ENCODE measurements at regions of chr1 and their contacts with region 1.

Region 1: DNA sequence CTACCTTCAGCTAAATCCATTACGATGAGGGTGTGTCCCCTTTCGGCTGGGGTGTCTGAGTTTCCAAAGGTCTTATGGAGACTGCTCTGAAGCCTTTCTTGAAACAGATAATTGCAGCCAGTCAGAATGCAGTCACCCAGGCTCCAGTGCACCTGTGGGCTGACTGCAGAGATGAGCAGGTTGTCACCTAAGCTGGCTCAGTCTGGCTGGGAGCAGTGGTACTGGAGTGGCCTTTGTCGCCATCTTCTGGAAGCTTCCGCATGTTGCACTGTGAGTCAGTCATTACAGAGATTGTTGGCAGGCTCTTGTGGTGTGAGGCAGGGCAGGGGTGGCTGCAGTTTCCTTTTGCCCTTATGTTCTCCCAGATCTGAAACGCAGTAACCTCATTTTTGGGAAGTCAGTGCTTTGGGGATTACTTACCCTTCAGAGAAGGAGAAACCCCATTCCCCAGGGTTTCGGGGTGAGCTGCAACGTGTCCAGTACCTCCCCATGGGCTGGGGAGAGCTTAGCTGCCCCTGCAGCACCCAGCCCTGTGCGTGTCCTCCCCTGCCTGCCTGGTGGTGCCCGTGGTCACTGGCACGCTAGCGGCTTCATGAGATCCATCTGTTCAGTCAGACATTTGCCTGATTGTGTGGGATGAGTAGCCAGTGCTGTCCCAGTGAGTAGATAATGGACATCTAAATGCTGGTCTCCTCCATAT is 48.0 kb downstream of the SMYD2 start:
- DNase-seq: peak; percentile 86 to 88
- H3K4me3 ChIP-seq: no peak overlapping the region
- H3K4me3 Mint-ChIP-seq: peak overlapping the region; percentile 44
- H3K27ac Mint-ChIP-seq: peak overlapping the region; percentile 63
- H3K4me1 ChIP-seq: peaks cover 32% of the 10 kb centered on the region
- H3K4me1 Mint-ChIP-seq: peaks cover 55% of the 10 kb centered on the region
- H3K27me3 ChIP-seq: no peaks in the 10 kb centered on the region
- H3K27me3 Mint-ChIP-seq: no peaks in the 10 kb centered on the region
- CTCF ChIP-seq: peak; percentile 93

Region 2: DNA sequence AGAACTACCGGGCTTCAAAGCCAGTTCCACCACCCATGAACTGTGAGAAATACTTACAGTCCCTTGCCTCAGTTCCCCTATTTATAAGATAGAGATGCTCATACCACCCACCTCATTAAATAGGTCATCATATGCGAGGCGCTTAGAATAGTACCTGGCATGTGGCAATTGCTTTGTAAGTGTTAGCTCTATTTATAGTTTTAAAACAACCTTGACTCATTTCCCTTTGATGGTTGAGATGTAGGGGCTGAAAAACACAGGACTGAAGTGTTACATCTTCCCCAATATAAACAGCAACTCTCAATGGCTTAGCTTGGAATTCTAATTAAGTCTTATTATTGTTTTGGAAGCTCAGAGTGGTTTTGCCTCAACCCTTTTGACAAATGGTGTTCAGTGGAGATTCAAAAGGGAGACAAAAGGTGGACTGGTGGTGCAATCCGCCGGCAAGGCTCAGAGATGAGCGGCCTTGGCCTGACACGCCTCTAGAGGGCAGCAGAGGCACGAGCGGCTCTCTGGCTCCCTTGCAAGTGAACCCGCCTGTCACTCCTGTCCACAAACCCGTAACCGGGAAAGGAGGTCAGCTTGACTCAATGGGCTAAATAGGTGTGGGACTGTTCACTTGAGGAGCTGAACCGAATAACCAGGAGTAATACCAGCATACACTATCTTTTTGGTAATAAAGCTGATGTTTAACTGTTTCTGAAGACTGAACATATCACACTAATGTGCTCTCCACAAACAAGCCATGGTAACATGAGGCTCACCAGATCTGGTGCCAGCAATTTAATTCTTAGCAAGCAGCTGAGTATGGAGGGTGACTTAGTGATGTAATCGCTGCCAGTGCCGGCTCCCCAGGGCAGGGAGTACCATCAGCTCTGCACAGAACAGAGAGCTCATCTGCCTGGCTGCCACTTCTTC is 67.5 kb before region 1 on chr1:
- CTCF ChIA-PET with region 1: interaction called, 47 read pairs
- POLR2A ChIA-PET with region 1: no interaction called
- intact Hi-C with region 1: loop called (anchors 1 kb)
- DNase-seq: peak; percentile 87 to 94
- H3K4me3 ChIP-seq: no peak overlapping the region
- H3K4me3 Mint-ChIP-seq: no peak overlapping the region
- H3K27ac Mint-ChIP-seq: no peak overlapping the region
- H3K4me1 ChIP-seq: peaks cover 15% of the 10 kb centered on the region; the same call in 1 of the 2 replicates
- H3K4me1 Mint-ChIP-seq: peaks cover 35% of the 10 kb centered on the region
- H3K27me3 ChIP-seq: no peaks in the 10 kb centered on the region
- H3K27me3 Mint-ChIP-seq: no peaks in the 10 kb centered on the region
- CTCF ChIP-seq: peak; percentile 90 to 99

Region 3: DNA sequence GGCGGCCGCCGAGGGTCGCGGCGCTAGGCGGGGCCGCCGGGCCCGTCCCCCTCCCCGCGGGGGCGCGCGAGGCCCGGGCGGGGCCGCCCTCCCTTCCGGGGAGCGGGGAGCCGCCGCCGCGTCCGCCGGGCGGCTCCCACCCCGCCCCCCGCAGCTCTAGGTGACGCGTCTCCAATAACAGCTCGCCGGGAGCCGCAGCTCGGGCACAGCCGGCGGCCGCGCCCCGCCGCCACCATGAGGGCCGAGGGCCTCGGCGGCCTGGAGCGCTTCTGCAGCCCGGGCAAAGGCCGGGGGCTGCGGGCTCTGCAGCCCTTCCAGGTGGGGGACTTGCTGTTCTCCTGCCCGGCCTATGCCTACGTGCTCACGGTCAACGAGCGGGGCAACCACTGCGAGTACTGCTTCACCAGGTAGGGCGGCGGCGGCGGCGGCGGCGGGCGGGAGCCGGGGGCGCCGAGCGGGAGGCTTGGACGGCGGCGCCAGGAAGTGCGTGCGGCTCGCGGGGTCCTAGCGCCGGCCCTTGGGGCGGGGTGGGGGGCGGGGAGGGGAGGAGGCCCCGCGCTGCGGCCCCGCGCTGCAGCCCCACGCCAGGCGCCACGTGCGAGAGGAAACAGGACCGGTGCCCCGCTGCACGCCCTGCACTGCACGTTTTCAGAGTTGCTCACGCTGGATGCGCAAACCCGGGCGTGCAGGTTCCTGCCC is 47.8 kb before region 1 on chr1 and contains the start of gene SMYD2:
- CTCF ChIA-PET with region 1: interaction called, 11 read pairs
- POLR2A ChIA-PET with region 1: interaction called, 3 read pairs
- intact Hi-C with region 1: loop called (anchors 1 kb)
- DNase-seq: peak; percentile 82 to 87
- H3K4me3 ChIP-seq: peak within 1 kb of the TSS; percentile 89
- H3K4me3 Mint-ChIP-seq: peak within 1 kb of the TSS; percentile 94
- H3K27ac Mint-ChIP-seq: peak within 1 kb of the TSS; percentile 94
- H3K4me1 ChIP-seq: peaks cover 69% of the 10 kb centered on the region
- H3K4me1 Mint-ChIP-seq: peaks cover 53% of the 10 kb centered on the region
- H3K27me3 ChIP-seq: no peaks in the 10 kb centered on the region
- H3K27me3 Mint-ChIP-seq: no peaks in the 10 kb centered on the region
- CTCF ChIP-seq: no peak
- total RNA-seq, gene SMYD2: 161 and 182 TPM in 2 replicates

Region 4: DNA sequence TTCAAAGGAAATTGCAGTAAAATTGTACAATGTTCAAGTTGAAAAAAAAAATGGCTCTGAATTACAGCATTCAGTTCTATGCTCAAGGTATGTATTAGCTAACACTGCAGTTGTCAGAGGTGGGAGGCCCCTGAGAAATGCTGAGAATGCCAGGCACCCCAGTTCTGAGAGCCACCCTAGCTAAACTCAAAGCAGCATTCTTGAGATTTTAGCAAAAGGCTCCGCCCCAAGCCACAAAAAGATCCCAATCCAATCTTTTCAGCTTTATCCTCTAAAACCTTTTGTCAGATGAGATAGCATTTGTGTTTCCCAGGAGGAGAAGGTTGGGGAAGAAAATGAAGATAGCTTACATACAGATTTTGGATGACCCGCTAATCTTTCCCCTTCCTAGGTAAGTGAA is 20.9 kb after region 1 on chr1:
- CTCF ChIA-PET with region 1: interaction called, 33 read pairs
- POLR2A ChIA-PET with region 1: interaction called, 3 read pairs
- intact Hi-C with region 1: no loop called
- DNase-seq: peak; percentile 82 to 88
- H3K4me3 ChIP-seq: no peak overlapping the region
- H3K4me3 Mint-ChIP-seq: peak overlapping the region; percentile 70
- H3K27ac Mint-ChIP-seq: peak overlapping the region; percentile 97
- H3K4me1 ChIP-seq: peaks cover 46% of the 10 kb centered on the region
- H3K4me1 Mint-ChIP-seq: peaks cover 33% of the 10 kb centered on the region
- H3K27me3 ChIP-seq: no peaks in the 10 kb centered on the region
- H3K27me3 Mint-ChIP-seq: no peaks in the 10 kb centered on the region
- CTCF ChIP-seq: no peak

Region 5: DNA sequence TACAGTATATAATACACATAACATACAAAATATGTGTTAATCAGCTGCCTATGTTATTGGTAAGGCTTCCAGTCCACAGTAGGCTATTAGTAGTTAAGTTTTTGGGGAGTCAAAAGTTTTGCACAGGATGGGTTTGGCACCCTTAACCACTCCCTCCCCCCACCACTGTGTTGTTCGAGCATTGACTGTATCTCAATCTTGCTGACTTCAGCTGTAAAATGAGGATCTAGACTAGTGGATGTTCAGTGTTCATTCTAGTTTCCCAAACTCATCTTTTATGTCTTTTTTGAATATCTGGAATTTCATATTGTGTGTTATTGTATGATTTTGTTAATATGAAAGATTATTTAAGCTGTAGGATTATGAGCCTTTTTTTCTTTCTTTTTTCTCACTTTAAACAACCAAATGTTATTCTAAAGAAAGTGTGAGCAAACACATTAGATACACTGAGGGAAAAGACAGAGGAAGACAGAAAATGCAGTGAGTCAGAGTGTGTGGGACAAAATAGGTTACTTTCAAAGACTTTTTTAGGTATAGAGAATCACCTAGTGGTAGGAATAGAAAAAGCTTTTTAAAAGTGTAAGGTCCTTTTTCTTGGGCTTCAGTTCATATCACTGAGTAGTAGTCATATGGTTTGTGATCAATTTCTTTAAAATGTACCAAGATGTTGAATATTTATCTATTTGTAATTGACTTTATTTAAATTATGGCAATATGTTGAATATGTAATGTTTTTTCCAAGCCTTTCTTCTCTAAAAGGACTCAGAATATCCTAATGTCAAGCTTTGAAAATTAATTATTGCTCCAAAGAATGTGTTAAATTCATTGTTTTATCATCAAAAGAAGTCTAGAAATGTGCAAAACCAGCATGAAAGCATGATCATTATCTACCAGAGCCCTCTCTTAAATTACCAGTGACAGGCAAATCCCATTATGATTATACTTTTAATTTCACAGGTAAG is 256.2 kb after region 1 on chr1:
- CTCF ChIA-PET with region 1: interaction called, 12 read pairs
- POLR2A ChIA-PET with region 1: no interaction called
- intact Hi-C with region 1: loop called (anchors 1 kb)
- DNase-seq: peak in 1 of 2 experiments; percentile 17
- H3K4me3 ChIP-seq: no peak overlapping the region
- H3K4me3 Mint-ChIP-seq: no peak overlapping the region
- H3K27ac Mint-ChIP-seq: no peak overlapping the region
- H3K4me1 ChIP-seq: no peaks in the 10 kb centered on the region; the same call in 1 of the 2 replicates
- H3K4me1 Mint-ChIP-seq: peaks cover 7% of the 10 kb centered on the region
- H3K27me3 ChIP-seq: no peaks in the 10 kb centered on the region
- H3K27me3 Mint-ChIP-seq: no peaks in the 10 kb centered on the region
- CTCF ChIP-seq: peak; percentile 46 to 89

Region 6: DNA sequence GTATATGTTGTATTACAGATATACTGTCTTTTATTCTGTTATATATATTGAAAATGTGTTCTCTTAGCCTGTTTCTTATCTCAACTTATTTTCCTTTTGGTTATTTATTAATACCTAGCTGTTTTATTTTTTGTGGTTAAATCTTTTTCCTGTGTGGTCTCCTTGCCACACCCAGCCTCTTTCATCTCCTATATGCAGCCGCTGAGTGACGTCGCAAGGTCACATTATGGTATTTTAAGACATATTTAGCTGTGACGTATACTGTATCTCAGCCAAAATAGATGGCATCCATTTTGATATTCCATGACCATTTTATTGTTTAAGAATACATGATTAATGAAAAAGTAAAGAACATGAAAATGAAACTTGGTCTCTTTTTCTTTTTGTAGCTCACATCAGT is 303.2 kb after region 1 on chr1:
- CTCF ChIA-PET with region 1: interaction called, 7 read pairs
- POLR2A ChIA-PET with region 1: no interaction called
- intact Hi-C with region 1: loop called (anchors 2 kb)
- DNase-seq: no peak
- H3K4me3 ChIP-seq: no peak overlapping the region
- H3K4me3 Mint-ChIP-seq: no peak overlapping the region
- H3K27ac Mint-ChIP-seq: no peak overlapping the region
- H3K4me1 ChIP-seq: no peaks in the 10 kb centered on the region
- H3K4me1 Mint-ChIP-seq: no peaks in the 10 kb centered on the region
- H3K27me3 ChIP-seq: no peaks in the 10 kb centered on the region
- H3K27me3 Mint-ChIP-seq: no peaks in the 10 kb centered on the region
- CTCF ChIP-seq: no peak

Region 7: DNA sequence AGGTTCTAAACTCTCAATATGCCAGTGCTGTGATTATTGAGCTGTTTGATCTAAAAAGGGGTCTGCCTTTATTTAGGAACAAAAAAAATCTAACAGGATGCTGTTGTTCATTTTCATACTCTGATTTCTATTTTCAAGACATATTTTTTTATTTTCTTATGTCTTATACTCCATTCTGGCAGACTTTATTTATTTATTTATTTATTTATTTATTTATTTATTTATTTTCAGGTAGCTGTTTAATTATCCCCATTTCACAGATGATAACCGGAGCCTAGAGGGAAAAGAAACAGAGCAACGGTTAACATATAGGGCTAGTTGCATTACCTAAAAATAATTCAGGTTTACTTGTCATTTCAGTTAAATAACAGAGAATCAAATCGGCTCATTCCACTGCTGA is 448.4 kb after region 1 on chr1:
- CTCF ChIA-PET with region 1: no interaction called
- POLR2A ChIA-PET with region 1: no interaction called
- intact Hi-C with region 1: no loop called
- DNase-seq: no peak
- H3K4me3 ChIP-seq: no peak overlapping the region
- H3K4me3 Mint-ChIP-seq: no peak overlapping the region
- H3K27ac Mint-ChIP-seq: no peak overlapping the region
- H3K4me1 ChIP-seq: no peaks in the 10 kb centered on the region
- H3K4me1 Mint-ChIP-seq: no peaks in the 10 kb centered on the region
- H3K27me3 ChIP-seq: no peaks in the 10 kb centered on the region
- H3K27me3 Mint-ChIP-seq: no peaks in the 10 kb centered on the region
- CTCF ChIP-seq: no peak